Esophagus muscularis mucosa (tissue), 4 donors: ENCODE measurements at regions of chr13 and their contacts with region 1.

Region 1: GRCh38 chr13:27620377-27621115 is at the start of gene LNX2:
- DNase-seq: peak; percentile 99
- H3K4me3 ChIP-seq: peak within 1 kb of the TSS; percentile 78 to 95 (median 88)
- H3K27ac ChIP-seq: peak within 1 kb of the TSS; percentile 98 to 99 (median 98)
- H3K4me1 ChIP-seq: peaks cover 30 to 53% (median 47%) of the 10 kb centered on the region in 4 donors
- H3K27me3 ChIP-seq: no peaks in the 10 kb centered on the region
- CTCF ChIP-seq: no peak
- EP300 ChIP-seq: no peak
- POLR2A ChIP-seq: peak; percentile 49
- total RNA-seq, gene LNX2: 10.2 to 14.1 (median 12.8) TPM

Region 2: GRCh38 chr13:26557393-26558023 is 1063.0 kb before region 1 on chr13 and contains the start of gene WASF3:
- intact Hi-C with region 1: loop called (anchors 10 kb)
- DNase-seq: peak; percentile 97
- H3K4me3 ChIP-seq: peak within 1 kb of the TSS; percentile 78 to 88 (median 84)
- H3K27ac ChIP-seq: peak within 1 kb of the TSS; percentile 71 to 85 (median 80)
- H3K4me1 ChIP-seq: peaks cover 0 to 27% (median 19%) of the 10 kb centered on the region in 4 donors
- H3K27me3 ChIP-seq: no peaks in the 10 kb centered on the region
- CTCF ChIP-seq: no peak
- EP300 ChIP-seq: no peak
- POLR2A ChIP-seq: no peak
- total RNA-seq, gene WASF3: 16.6 to 19.9 (median 18.4) TPM

Region 3: GRCh38 chr13:27424246-27425157 is 196.0 kb before region 1 on chr13 and contains the start of gene GTF3A:
- intact Hi-C with region 1: loop called (anchors 10 kb)
- DNase-seq: no peak
- H3K4me3 ChIP-seq: peak within 1 kb of the TSS; percentile 71 to 96 (median 87)
- H3K27ac ChIP-seq: peak within 1 kb of the TSS; percentile 85 to 94 (median 90)
- H3K4me1 ChIP-seq: peaks cover 30 to 47% (median 42%) of the 10 kb centered on the region in 4 donors
- H3K27me3 ChIP-seq: no peaks in the 10 kb centered on the region
- CTCF ChIP-seq: peak in 1 of 3 experiments; percentile 14
- EP300 ChIP-seq: no peak
- POLR2A ChIP-seq: peak; percentile 31
- total RNA-seq, gene GTF3A: 129 to 197 (median 140) TPM

Region 4: DNA sequence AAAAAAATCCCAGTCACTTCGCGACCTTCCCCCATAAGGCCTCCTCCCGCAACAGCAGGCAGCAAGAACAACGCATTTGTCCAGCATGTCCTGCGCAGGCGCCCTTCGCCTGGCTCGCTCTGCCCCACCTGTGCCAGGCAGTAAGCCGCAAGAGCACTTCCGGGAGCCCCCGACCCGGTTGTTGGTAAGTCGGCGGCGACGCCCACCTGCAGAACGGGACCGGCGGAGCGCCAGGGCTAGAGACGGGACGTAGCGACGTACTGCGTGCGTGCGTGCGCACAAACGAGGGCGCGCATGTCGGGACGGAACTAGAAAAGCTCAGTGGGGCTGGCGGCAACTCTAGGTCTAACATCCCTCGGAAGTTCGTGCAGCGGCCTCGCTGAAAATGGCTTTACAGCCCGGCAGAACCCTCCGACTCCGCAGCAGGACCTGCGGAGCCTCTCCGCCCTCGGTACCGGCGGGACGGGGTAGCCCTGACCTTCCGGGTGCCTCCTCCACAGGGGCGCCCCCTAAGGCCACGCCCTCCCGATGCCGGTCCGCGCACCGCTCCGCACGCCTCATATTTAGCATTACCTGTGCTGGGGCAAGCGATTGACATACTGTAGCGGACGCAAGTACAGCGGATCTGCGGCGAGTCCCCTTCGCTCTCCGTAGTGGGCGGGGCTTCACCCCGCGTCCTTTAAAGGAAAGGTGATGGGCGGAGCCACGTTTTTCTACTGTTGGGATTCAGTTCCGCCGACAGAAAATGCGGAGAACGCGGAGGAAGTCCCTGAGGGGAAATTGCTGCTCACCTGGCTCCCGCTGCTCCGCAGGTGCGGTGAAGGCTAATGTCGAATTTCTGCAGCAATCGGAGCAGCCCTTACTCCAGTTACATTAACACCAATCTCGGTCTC is 170.4 kb before region 1 on chr13 and contains the start of gene MTIF3:
- intact Hi-C with region 1: loop called (anchors 5 kb)
- DNase-seq: peak; percentile 98
- H3K4me3 ChIP-seq: peak within 1 kb of the TSS; percentile 84 to 93 (median 92)
- H3K27ac ChIP-seq: peak within 1 kb of the TSS; percentile 95 to 99 (median 98)
- H3K4me1 ChIP-seq: peaks cover 31 to 47% (median 38%) of the 10 kb centered on the region in 4 donors
- H3K27me3 ChIP-seq: no peaks in the 10 kb centered on the region
- CTCF ChIP-seq: peak in 1 of 3 experiments; percentile 23
- EP300 ChIP-seq: no peak
- POLR2A ChIP-seq: peak; percentile 33
- total RNA-seq, gene MTIF3: 45.1 to 86.6 (median 67.5) TPM

Region 5: DNA sequence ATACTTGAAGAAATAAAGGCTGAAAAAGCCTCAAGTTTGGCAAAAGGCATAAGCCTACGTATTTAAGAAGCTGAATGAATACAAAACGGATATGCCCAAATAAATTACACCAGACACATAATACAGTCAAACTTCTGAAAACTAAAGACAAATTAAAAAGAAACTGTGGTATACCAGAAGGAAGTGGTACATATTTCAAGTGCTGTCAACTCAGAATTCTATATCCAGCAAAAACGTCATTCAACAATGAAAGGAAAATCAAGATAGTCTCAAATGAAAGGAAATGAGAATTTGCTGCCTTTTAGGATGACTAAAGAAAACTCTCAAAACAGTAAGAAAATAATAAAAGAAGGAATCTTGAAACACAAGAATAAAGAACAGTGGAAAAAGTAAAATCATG is 70.7 kb after region 1 on chr13:
- intact Hi-C with region 1: no loop called
- DNase-seq: no peak
- H3K4me3 ChIP-seq: no peak overlapping the region
- H3K27ac ChIP-seq: no peak overlapping the region
- H3K4me1 ChIP-seq: no peaks in the 10 kb centered on the region
- H3K27me3 ChIP-seq: no peaks in the 10 kb centered on the region
- CTCF ChIP-seq: no peak
- EP300 ChIP-seq: no peak
- POLR2A ChIP-seq: no peak